Activated CD8-positive, alpha-beta T cell treated with anti-CD3 and anti-CD28 coated beads for 36 hours (primary cell): ENCODE measurements at regions of chr4 and their contacts with region 1.

Region 1: DNA sequence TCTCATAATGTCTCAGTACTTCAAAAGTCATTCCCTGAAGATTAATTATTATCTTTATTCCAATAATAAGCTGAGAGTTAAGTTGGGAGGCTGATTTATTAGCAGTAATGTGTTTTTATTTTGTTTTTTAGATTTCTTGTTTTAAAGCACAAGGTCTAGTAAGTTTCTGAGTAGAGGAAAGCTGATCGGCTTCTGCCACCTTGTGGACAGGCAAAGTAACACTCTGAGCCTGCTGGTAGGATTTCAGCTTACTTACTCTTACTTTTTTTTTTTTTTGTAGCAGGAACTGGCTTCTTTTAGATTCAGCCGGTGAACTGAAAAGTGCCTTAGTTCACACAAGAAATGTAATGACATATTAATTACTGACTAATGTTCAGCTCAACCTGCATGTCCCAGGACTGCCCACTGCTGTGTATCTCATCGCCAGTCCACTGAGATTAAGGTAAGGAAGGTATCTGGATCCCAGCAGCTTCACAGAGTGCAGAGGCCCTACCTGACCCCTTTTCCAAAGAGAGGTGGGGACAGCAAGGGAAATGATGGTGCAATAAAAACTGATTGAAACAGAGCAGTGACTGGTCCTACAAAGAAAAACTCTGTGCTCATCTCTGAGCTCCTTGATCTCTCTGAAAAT is 126.5 kb downstream of the ADGRA3 start:
- DNase-seq: peak; percentile 59
- ATAC-seq: peak; percentile 74
- H3K4me3 Mint-ChIP-seq: no peak overlapping the region
- H3K27ac Mint-ChIP-seq: no peak overlapping the region
- H3K4me1 Mint-ChIP-seq: peaks cover 12% of the 10 kb centered on the region
- H3K27me3 Mint-ChIP-seq: no peaks in the 10 kb centered on the region
- CTCF ChIP-seq: peak; percentile 67

Region 2: DNA sequence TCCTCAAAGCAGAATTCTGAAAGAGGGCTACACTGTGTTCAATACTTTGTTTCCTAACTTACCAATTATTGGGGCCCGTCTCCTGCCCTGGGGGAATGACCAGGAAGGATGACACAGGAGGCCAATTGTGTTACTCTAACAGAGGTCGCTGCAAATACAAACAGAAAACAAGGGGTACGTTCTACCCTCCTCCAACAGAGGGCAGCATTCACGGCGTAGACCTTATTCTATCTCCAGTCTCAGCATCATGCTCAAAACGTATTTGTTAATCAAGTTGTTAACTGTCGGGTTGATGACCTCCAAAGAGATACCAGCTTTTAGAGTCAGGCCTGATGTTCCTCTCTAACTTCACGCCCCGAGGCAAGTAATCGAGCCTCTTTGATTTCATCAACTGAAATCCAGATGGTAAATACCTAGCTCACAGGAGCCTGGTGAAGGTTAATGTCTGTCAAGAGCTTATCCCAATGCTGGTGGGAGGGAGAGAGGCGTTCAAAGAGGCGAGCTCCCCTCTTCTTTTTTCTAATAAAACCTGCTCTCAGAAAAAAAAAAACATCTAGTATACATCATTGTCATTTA is 259.8 kb before region 1 on chr4:
- CTCF ChIA-PET with region 1: no interaction called
- POLR2A ChIA-PET with region 1: no interaction called
- intact Hi-C with region 1: loop called (anchors 10 kb)
- DNase-seq: peak; percentile 39
- ATAC-seq: peak; percentile 49
- H3K4me3 Mint-ChIP-seq: no peak overlapping the region
- H3K27ac Mint-ChIP-seq: no peak overlapping the region
- H3K4me1 Mint-ChIP-seq: no peaks in the 10 kb centered on the region
- H3K27me3 Mint-ChIP-seq: no peaks in the 10 kb centered on the region
- CTCF ChIP-seq: peak; percentile 40

Region 3: DNA sequence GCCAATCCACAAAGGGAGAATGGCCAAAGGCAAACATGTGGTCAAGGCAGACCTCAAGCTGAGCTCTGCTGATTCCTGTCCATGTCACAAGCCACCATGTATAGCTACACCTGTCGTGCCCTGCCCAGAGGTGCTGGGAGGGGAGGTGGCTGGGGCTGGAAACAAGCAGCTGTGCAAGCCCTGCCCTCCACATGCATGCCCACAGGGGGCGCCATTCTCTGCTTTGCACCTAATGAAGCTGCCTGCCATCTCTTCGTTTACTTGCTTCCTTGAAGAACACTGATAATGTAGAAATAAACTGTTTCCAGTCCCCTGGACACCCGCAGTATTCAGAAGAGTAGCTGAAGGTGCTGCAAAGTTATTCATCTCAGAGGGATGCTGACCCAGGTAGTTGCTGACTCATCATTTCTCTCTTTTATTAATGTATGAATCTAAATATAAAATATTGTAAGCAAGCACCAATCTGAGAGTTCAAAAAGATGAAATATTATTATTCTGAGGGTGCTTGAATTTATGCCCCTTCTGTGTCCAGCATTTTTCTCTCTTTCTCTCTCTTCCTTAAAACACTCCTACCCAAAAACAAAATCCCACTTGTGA is 152.1 kb before region 1 on chr4:
- CTCF ChIA-PET with region 1: interaction called, 9 read pairs
- POLR2A ChIA-PET with region 1: no interaction called
- intact Hi-C with region 1: loop called (anchors 5 kb)
- DNase-seq: peak; percentile 74
- ATAC-seq: peak; percentile 64
- H3K4me3 Mint-ChIP-seq: peak overlapping the region; percentile 53
- H3K27ac Mint-ChIP-seq: no peak overlapping the region
- H3K4me1 Mint-ChIP-seq: peaks cover 7% of the 10 kb centered on the region
- H3K27me3 Mint-ChIP-seq: no peaks in the 10 kb centered on the region
- CTCF ChIP-seq: peak; percentile 62

Region 4: DNA sequence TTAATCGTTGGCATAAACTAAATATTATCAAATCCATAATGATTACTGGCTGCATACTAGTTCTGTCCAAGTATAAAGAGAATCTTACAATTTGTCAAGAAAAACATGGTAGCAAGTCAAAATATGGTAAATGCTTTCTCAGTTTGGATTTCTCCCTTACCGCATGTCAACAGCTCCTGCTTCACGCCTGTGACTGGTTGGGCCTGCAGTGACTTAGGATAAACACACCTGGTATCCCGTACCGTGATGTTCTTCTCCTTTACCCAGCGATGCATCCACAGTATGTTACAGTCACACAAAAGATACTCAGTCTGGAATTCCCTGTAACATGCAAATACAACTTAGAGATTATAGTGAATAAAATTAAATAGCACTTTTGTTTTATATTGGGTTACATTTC is 55.5 kb after region 1 on chr4:
- CTCF ChIA-PET with region 1: interaction called, 12 read pairs
- POLR2A ChIA-PET with region 1: no interaction called
- intact Hi-C with region 1: no loop called
- DNase-seq: no peak
- ATAC-seq: peak; percentile 49
- H3K4me3 Mint-ChIP-seq: peak overlapping the region; percentile 73
- H3K27ac Mint-ChIP-seq: peak overlapping the region; percentile 98
- H3K4me1 Mint-ChIP-seq: peaks cover 37% of the 10 kb centered on the region
- H3K27me3 Mint-ChIP-seq: no peaks in the 10 kb centered on the region
- CTCF ChIP-seq: no peak